ENCODE measurements at regions of chr7 and their contacts with region 1.

Region 1: GRCh38 chr7:28062197-28062991 is 118.2 kb downstream of the JAZF1 start:
- DNase-seq: peak; percentile 61
- H3K4me3 Mint-ChIP-seq: no peak overlapping the region
- H3K27ac Mint-ChIP-seq: no peak overlapping the region
- H3K4me1 Mint-ChIP-seq: no peaks in the 10 kb centered on the region
- H3K27me3 Mint-ChIP-seq: peaks cover 12% of the 10 kb centered on the region

Region 2: GRCh38 chr7:28083164-28083997 is 21.0 kb after region 1 on chr7:
- CTCF ChIA-PET with region 1: interaction called, 16 read pairs
- DNase-seq: no peak
- H3K4me3 Mint-ChIP-seq: no peak overlapping the region
- H3K27ac Mint-ChIP-seq: no peak overlapping the region
- H3K4me1 Mint-ChIP-seq: no peaks in the 10 kb centered on the region
- H3K27me3 Mint-ChIP-seq: no peaks in the 10 kb centered on the region

Region 3: DNA sequence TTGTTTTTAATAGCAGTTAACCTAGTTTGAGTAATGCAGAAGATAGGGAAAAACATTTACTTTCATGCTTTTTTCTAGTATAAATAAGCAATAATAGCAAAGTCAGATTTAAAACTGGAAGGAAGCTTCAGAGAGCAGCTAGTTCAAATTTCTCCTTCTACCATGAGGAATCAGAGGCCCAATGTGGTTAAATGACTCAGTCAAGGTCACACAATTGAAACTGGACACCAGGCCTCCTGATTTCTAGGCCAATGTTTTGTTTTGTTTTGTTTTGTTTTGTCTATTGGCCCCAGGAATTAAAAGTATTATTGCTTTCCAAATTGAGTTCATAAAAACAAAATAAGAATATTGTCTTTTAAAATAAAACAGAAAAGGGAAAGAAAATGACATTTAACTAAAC is 773.4 kb after region 1 on chr7:
- CTCF ChIA-PET with region 1: no interaction called
- DNase-seq: no peak
- H3K4me3 Mint-ChIP-seq: no peak overlapping the region
- H3K27ac Mint-ChIP-seq: no peak overlapping the region
- H3K4me1 Mint-ChIP-seq: no peaks in the 10 kb centered on the region
- H3K27me3 Mint-ChIP-seq: peaks cover 4% of the 10 kb centered on the region